ENCODE measurements at regions of chr1 and their contacts with region 1.

Region 1: DNA sequence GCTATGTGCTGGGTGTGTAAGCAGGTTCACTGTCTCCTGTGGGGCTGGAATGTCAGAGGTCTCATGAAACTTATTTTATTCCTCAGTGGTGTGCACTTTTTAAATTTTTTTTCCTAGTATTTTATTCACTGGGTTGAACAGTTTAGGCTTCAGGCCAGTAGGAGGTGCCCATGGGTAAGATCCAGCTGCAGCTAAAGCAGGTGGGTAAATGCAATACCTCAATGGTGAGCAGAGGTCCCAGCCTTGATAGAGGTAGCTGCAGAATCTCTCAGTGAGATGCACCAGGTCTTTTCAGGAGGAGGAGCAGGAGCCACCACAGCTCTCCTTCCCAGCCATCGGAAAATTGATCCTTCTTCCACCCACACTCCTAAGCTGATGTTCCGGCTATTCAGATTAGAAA is 12.6 kb upstream of the OR6N2 start:
- DNase-seq: no peak
- H3K4me3 ChIP-seq: no peak overlapping the region
- H3K27ac ChIP-seq: no peak overlapping the region
- H3K4me1 ChIP-seq: no peaks in the 10 kb centered on the region
- H3K27me3 ChIP-seq: peaks cover 4% of the 10 kb centered on the region
- CTCF ChIP-seq: peak; percentile 27 to 40

Region 2: DNA sequence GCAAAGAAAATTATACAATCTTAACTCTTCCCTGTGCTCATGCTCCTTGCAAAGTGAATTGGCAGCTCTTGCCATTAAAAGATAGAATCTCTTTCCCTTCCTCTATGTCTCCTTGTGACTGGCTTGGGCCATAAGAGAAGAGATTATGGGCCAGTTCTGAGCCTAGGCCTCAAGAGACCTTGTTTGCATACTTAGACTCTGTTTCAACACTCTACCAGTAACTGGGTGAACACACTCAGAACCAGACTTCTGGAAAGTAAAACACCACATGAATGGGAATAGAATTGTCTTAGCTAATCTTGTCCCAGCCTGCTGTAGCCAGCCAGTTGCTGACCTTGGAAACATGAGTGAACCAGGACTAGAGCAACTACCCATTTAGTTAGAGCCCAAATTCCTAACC is 57.8 kb before region 1 on chr1:
- CTCF ChIA-PET with region 1: no interaction called
- dilution Hi-C with region 1: loop called (anchors 10 kb)
- in situ Hi-C with region 1: no loop called
- intact Hi-C with region 1: no loop called
- DNase-seq: no peak
- H3K4me3 ChIP-seq: no peak overlapping the region
- H3K27ac ChIP-seq: no peak overlapping the region
- H3K4me1 ChIP-seq: no peaks in the 10 kb centered on the region
- H3K27me3 ChIP-seq: peaks cover 2% of the 10 kb centered on the region
- CTCF ChIP-seq: no peak

Region 3: GRCh38 chr1:158972841-158973240 is 179.2 kb after region 1 on chr1:
- CTCF ChIA-PET with region 1: no interaction called
- dilution Hi-C with region 1: no loop called
- in situ Hi-C with region 1: no loop called
- intact Hi-C with region 1: loop called (anchors 2 kb)
- DNase-seq: peak; percentile 21
- H3K4me3 ChIP-seq: no peak overlapping the region
- H3K27ac ChIP-seq: no peak overlapping the region
- H3K4me1 ChIP-seq: peaks cover 12% of the 10 kb centered on the region
- H3K27me3 ChIP-seq: no peaks in the 10 kb centered on the region
- CTCF ChIP-seq: peak; percentile 39 to 69

Measured in mammary epithelial cell (primary cell).